ENCODE measurements at regions of chr13 and their contacts with region 1.

Region 1: GRCh38 chr13:39468306-39468705 is 134.7 kb downstream of the LHFPL6 start:
- DNase-seq: no peak
- H3K4me3 ChIP-seq: no peak overlapping the region
- H3K27ac ChIP-seq: no peak overlapping the region
- H3K4me1 ChIP-seq: no peaks in the 10 kb centered on the region
- H3K27me3 ChIP-seq: no peaks in the 10 kb centered on the region
- CTCF ChIP-seq: no peak
- POLR2A ChIP-seq: no peak

Region 2: GRCh38 chr13:39557285-39557955 is 89.1 kb after region 1 on chr13:
- intact Hi-C with region 1: no loop called
- DNase-seq: no peak
- H3K4me3 ChIP-seq: no peak overlapping the region
- H3K27ac ChIP-seq: no peak overlapping the region
- H3K4me1 ChIP-seq: no peaks in the 10 kb centered on the region
- H3K27me3 ChIP-seq: no peaks in the 10 kb centered on the region
- CTCF ChIP-seq: no peak
- POLR2A ChIP-seq: no peak

Region 3: DNA sequence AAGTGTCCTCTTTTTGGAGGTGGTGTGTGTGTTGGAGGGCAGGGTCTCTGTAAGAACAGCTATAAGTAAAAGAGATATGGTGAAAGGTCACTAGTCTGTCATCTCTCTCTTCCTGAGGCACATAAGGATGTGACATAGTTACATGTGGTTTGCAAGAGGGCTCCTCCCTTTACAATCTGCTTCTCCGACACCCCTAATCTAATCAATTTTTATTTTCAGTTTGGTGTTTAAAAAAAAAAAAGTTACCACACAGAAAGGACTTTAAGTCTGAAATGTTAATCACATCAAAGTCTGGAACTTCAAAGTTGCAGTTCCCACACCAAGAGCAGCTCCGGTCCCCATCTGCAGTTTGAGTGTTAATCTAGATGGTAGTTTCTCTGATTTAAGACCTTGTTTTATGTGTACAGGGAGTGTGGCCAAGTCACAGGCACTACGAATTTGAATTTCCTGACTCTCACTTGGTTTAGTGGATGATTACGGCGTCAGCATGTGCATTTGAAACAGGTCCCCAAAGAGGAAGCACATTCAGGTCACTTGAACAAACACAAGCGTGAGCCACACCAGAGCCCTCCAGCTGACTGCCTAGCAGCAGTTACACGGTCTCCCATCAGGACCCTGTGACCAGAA is 1145.0 kb after region 1 on chr13:
- intact Hi-C with region 1: no loop called
- DNase-seq: no peak
- H3K4me3 ChIP-seq: no peak overlapping the region
- H3K27ac ChIP-seq: peak overlapping the region; percentile 13 to 62
- H3K4me1 ChIP-seq: peaks cover 0 to 17% of the 10 kb centered on the region in 2 donors
- H3K27me3 ChIP-seq: no peaks in the 10 kb centered on the region
- CTCF ChIP-seq: no peak
- POLR2A ChIP-seq: no peak

Region 4: GRCh38 chr13:40688781-40689180 is 1220.5 kb after region 1 on chr13:
- intact Hi-C with region 1: loop called (anchors 5 kb)
- DNase-seq: no peak
- H3K4me3 ChIP-seq: no peak overlapping the region
- H3K27ac ChIP-seq: no peak overlapping the region
- H3K4me1 ChIP-seq: no peaks in the 10 kb centered on the region
- H3K27me3 ChIP-seq: no peaks in the 10 kb centered on the region
- CTCF ChIP-seq: no peak
- POLR2A ChIP-seq: no peak